Natural killer cell (primary cell): ENCODE measurements at regions of chr16 and their contacts with region 1.

Region 1: DNA sequence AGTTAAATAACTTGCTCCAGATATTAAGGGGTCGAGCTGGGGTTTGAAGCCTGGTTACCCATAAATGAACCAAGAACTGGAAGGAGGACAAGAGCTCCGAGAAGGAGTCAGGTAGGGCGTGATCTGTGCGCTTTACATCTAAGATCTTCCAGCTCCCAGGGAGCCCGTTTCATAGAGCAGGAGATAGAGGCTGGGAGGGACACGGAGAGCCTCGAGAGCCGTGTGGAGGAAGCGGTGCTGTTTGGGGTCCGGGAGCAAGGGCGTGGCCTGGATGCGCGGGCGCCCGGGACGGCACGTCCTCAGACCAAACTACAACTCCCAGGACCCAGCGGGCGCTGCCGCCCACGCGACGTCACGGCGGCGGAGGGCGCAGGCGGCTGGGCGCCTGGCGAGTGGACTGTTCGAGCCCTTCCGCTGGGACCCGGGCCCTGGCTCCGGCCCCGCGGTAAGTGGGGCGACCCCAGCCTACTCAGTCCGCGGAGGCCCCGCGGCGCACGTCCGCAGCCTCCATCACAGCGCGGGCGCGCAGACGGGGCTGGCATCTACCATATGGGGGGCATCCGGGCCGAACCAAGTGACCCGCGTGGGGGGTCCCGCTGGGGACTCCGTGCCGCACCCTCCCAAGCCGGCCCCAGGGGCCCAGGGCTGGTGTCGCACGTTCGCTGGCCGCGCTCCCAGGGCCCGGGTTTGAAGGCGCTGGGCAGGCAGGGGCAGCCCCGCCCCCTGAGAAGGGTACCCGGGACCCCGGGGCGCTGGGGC is at the start of gene BCKDK:
- DNase-seq: peak; percentile 47 to 74
- ATAC-seq: peak; percentile 67 to 70 (median 69)
- H3K4me3 ChIP-seq: peak within 1 kb of the TSS; percentile 45
- H3K4me3 Mint-ChIP-seq: peak within 1 kb of the TSS; percentile 89
- H3K27ac ChIP-seq: peak within 1 kb of the TSS; percentile 26
- H3K27ac Mint-ChIP-seq: peak within 1 kb of the TSS; percentile 64 to 76
- H3K4me1 ChIP-seq: peaks cover 28% of the 10 kb centered on the region
- H3K4me1 Mint-ChIP-seq: peaks cover 19 to 25% of the 10 kb centered on the region in 2 donors
- H3K27me3 ChIP-seq: no peaks in the 10 kb centered on the region
- H3K27me3 Mint-ChIP-seq: no peaks in the 10 kb centered on the region
- CTCF ChIP-seq: no peak
- total RNA-seq, gene BCKDK: 9.9 to 16.3 (median 12.1) TPM

Region 2: DNA sequence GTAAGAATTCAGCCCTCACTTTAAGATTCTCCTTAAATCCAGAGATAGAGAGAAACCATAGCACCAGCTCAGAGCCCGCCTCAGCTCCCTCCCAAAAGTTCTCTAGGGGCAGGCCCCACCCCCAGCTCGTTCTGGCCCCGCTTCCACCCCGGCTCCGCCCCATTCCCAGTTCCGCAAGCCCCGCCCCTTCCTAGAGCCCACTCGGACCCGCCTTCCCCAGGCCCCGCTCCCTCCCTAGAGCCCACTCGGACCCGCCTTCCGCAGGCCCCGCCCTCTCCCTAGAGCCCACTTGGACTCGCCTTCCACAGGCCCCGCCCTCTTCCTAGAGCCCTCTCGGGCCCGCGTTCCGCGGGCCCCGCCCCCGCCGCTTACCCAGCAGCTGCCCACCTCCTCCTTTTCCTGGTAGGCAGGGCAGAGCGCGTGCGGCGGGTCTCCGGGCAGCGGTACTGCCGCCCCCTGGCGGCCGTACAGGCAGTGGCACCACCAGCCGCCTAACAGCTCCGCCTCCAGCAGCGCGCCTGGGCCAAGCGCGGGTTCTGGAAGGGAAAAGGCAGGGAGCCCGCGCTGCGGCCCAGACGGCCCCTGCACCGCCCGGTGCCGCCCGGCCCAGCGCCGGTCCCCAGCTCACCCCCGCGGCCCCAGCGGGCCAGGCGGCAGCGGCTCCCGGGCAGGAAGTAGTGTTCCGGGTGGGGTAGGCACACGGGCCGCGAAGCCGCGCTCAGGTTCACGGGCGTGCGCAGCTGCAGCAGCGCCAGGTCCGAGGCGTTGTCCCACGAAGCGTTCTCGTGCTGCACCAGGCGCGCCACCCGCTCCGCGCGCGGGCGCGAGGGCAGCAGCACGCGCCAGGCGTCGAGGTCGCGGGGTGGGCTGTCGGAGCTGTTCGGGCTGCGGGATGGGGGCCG is 34.1 kb after region 1 on chr16:
- intact Hi-C with region 1: loop called (anchors 5 kb)
- DNase-seq: peak; percentile 86 to 98
- ATAC-seq: peak; percentile 86 to 97 (median 88)
- H3K4me3 ChIP-seq: peak overlapping the region; percentile 6
- H3K4me3 Mint-ChIP-seq: peak overlapping the region; percentile 75
- H3K27ac ChIP-seq: peak overlapping the region; percentile 62
- H3K27ac Mint-ChIP-seq: peak overlapping the region; percentile 76 to 82
- H3K4me1 ChIP-seq: peaks cover 19% of the 10 kb centered on the region
- H3K4me1 Mint-ChIP-seq: peaks cover 15 to 22% of the 10 kb centered on the region in 2 donors
- H3K27me3 ChIP-seq: no peaks in the 10 kb centered on the region
- H3K27me3 Mint-ChIP-seq: no peaks in the 10 kb centered on the region
- CTCF ChIP-seq: peak; percentile 87